Naive thymus-derived CD4-positive, alpha-beta T cell (primary cell): ENCODE measurements at regions of chr14 and their contacts with region 1.

Region 1: GRCh38 chr14:102694530-102695166 is 82.6 kb upstream of the TRAF3 start:
- DNase-seq: peak in 8 of 9 donors; percentile 45 to 71 (median 64)
- ATAC-seq: peak; percentile 87
- H3K4me3 ChIP-seq: no peak overlapping the region
- H3K4me3 Mint-ChIP-seq: no peak overlapping the region
- H3K27ac ChIP-seq: no peak overlapping the region
- H3K27ac Mint-ChIP-seq: peak overlapping the region in 3 of 9 donors; percentile 15 to 60 (median 43)
- H3K4me1 ChIP-seq: peaks cover 0 to 3% of the 10 kb centered on the region in 2 donors
- H3K4me1 Mint-ChIP-seq: peaks cover 25 to 50% (median 31%) of the 10 kb centered on the region in 7 donors
- H3K27me3 ChIP-seq: no peaks in the 10 kb centered on the region
- H3K27me3 Mint-ChIP-seq: no peaks in the 10 kb centered on the region

Region 2: GRCh38 chr14:102333795-102334705 is 360.6 kb before region 1 on chr14:
- CTCF ChIA-PET with region 1: no interaction called
- POLR2A ChIA-PET with region 1: no interaction called
- intact Hi-C with region 1: no loop called
- DNase-seq: no peak
- ATAC-seq: no peak
- H3K4me3 ChIP-seq: no peak overlapping the region
- H3K4me3 Mint-ChIP-seq: no peak overlapping the region
- H3K27ac ChIP-seq: no peak overlapping the region
- H3K27ac Mint-ChIP-seq: peak overlapping the region in 1 of 9 donors; percentile 59
- H3K4me1 ChIP-seq: no peaks in the 10 kb centered on the region
- H3K4me1 Mint-ChIP-seq: peaks cover 0 to 9% (median 0%) of the 10 kb centered on the region in 7 donors
- H3K27me3 ChIP-seq: no peaks in the 10 kb centered on the region
- H3K27me3 Mint-ChIP-seq: no peaks in the 10 kb centered on the region

Region 3: GRCh38 chr14:102377696-102378095 is 317.0 kb before region 1 on chr14:
- CTCF ChIA-PET with region 1: no interaction called
- POLR2A ChIA-PET with region 1: no interaction called
- intact Hi-C with region 1: no loop called
- DNase-seq: no peak
- ATAC-seq: no peak
- H3K4me3 ChIP-seq: no peak overlapping the region
- H3K4me3 Mint-ChIP-seq: no peak overlapping the region
- H3K27ac ChIP-seq: no peak overlapping the region
- H3K27ac Mint-ChIP-seq: no peak overlapping the region
- H3K4me1 ChIP-seq: no peaks in the 10 kb centered on the region
- H3K4me1 Mint-ChIP-seq: peaks cover 0 to 30% (median 0%) of the 10 kb centered on the region in 7 donors
- H3K27me3 ChIP-seq: no peaks in the 10 kb centered on the region
- H3K27me3 Mint-ChIP-seq: no peaks in the 10 kb centered on the region

Region 4: DNA sequence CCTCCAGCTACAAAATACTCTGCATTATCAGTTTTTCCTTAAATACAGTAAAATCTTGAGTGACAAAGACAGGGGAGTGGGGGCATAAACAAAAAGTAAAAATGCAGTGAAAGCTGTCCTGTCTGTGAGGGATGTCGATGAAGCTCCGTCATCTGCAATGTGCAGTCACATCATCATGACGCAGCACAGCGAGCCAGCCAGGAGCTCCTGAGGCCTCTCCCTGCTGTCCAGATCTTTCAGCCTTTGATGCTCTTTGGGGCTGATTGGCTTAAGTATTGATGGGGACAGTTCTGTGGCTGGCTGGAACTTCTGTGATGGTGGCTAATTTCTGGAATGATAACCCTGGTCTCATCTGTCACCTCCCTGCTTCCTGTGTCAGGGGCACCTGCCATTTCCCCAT is 28.0 kb after region 1 on chr14:
- CTCF ChIA-PET with region 1: no interaction called
- POLR2A ChIA-PET with region 1: no interaction called
- intact Hi-C with region 1: no loop called
- DNase-seq: no peak
- ATAC-seq: no peak
- H3K4me3 ChIP-seq: no peak overlapping the region
- H3K4me3 Mint-ChIP-seq: no peak overlapping the region
- H3K27ac ChIP-seq: no peak overlapping the region
- H3K27ac Mint-ChIP-seq: no peak overlapping the region
- H3K4me1 ChIP-seq: no peaks in the 10 kb centered on the region
- H3K4me1 Mint-ChIP-seq: peaks cover 0 to 1% (median under 1%) of the 10 kb centered on the region in 7 donors
- H3K27me3 ChIP-seq: no peaks in the 10 kb centered on the region
- H3K27me3 Mint-ChIP-seq: no peaks in the 10 kb centered on the region

Region 5: GRCh38 chr14:102917469-102918211 is 223.0 kb after region 1 on chr14:
- CTCF ChIA-PET with region 1: interaction called, 6 read pairs
- POLR2A ChIA-PET with region 1: no interaction called
- intact Hi-C with region 1: loop called (anchors 1 kb)
- DNase-seq: peak in 7 of 9 donors; percentile 36 to 58 (median 45)
- ATAC-seq: peak; percentile 58
- H3K4me3 ChIP-seq: no peak overlapping the region
- H3K4me3 Mint-ChIP-seq: no peak overlapping the region
- H3K27ac ChIP-seq: no peak overlapping the region
- H3K27ac Mint-ChIP-seq: peak overlapping the region in 3 of 9 donors; percentile 39 to 75 (median 71)
- H3K4me1 ChIP-seq: no peaks in the 10 kb centered on the region
- H3K4me1 Mint-ChIP-seq: peaks cover 0 to 2% (median 0%) of the 10 kb centered on the region in 7 donors
- H3K27me3 ChIP-seq: no peaks in the 10 kb centered on the region
- H3K27me3 Mint-ChIP-seq: no peaks in the 10 kb centered on the region

Region 6: GRCh38 chr14:103091041-103091882 is 396.6 kb after region 1 on chr14:
- CTCF ChIA-PET with region 1: interaction called, 21 read pairs
- POLR2A ChIA-PET with region 1: no interaction called
- intact Hi-C with region 1: loop called in 1 of 2 experiments (anchors 1 kb)
- DNase-seq: peak; percentile 38 to 80 (median 64)
- ATAC-seq: peak; percentile 94
- H3K4me3 ChIP-seq: peak overlapping the region; percentile 43
- H3K4me3 Mint-ChIP-seq: peak overlapping the region; percentile 14 to 80 (median 62)
- H3K27ac ChIP-seq: no peak overlapping the region
- H3K27ac Mint-ChIP-seq: no peak overlapping the region
- H3K4me1 ChIP-seq: no peaks in the 10 kb centered on the region
- H3K4me1 Mint-ChIP-seq: peaks cover 0 to 3% (median 0%) of the 10 kb centered on the region in 7 donors
- H3K27me3 ChIP-seq: no peaks in the 10 kb centered on the region
- H3K27me3 Mint-ChIP-seq: peaks cover 0 to 11% (median 5%) of the 10 kb centered on the region in 5 donors

Region 7: GRCh38 chr14:103185051-103185992 is 490.7 kb after region 1 on chr14:
- CTCF ChIA-PET with region 1: interaction called, 3 read pairs
- POLR2A ChIA-PET with region 1: no interaction called
- intact Hi-C with region 1: loop called in 1 of 2 experiments (anchors 1 kb)
- DNase-seq: peak in 5 of 9 donors; percentile 8 to 17 (median 15)
- ATAC-seq: no peak
- H3K4me3 ChIP-seq: no peak overlapping the region
- H3K4me3 Mint-ChIP-seq: no peak overlapping the region
- H3K27ac ChIP-seq: no peak overlapping the region
- H3K27ac Mint-ChIP-seq: peak overlapping the region in 1 of 9 donors; percentile 32
- H3K4me1 ChIP-seq: no peaks in the 10 kb centered on the region
- H3K4me1 Mint-ChIP-seq: peaks cover 0 to 18% (median 10%) of the 10 kb centered on the region in 7 donors
- H3K27me3 ChIP-seq: no peaks in the 10 kb centered on the region
- H3K27me3 Mint-ChIP-seq: peaks cover 31 to 52% (median 51%) of the 10 kb centered on the region in 5 donors